ENCODE measurements at regions of chr13 and their contacts with region 1.

Region 1: GRCh38 chr13:98576963-98577822 is at the start of gene STK24:
- DNase-seq: peak; percentile 83
- ATAC-seq: peak; percentile 85
- total RNA-seq, gene STK24: 69.6 TPM

Region 2: DNA sequence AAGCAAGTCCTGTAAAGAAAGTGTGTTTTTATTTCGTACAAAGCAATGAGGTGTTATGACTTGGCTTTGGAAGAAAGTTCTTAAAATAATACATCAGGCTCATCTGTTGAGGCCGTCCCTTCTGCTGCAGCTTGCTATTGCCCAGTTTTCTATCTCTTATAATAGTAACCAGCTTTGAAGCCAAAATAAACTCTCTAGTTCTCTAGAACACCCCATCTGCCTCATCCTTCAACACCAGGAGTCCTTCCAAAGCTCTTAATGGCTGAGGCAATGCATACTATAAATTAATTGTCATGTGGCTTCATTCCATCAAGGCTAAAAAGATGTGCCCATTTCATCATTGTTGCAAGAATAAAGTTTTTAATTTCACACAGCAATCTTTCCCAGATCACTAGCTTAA is 673.1 kb before region 1 on chr13:
- intact Hi-C with region 1: no loop called
- DNase-seq: no peak
- ATAC-seq: peak; percentile 85

Region 3: DNA sequence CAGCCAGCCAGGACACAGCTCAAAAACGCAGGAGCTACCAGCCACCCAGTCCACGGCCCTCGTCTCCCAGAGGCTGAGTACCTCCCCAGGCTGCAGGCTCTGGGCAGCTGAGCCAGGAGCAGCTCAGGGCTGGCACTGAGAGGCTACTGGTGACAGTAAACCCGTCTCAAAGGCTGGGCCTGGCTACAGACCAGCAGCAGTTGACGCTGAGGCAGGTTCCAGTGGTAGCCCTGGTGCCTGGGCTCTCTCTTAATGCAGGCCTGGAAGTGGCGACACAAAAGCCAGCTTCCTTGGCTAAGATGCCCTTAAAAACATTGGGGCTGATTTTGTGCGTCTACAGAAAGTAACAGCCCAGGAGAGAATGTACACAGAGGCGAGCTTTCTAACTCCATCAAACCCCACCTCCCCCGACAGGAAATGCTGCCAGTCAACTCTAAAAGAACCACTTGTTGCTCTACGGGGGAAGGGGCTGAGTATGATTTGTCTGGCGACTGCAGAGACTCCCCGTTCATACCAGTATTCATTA is 126.6 kb before region 1 on chr13:
- intact Hi-C with region 1: loop called (anchors 1 kb)
- DNase-seq: peak; percentile 85
- ATAC-seq: peak; percentile 58

Region 4: GRCh38 chr13:98466634-98467236 is 110.5 kb before region 1 on chr13:
- intact Hi-C with region 1: loop called (anchors 5 kb)
- DNase-seq: no peak
- ATAC-seq: no peak

Region 5: GRCh38 chr13:98482476-98483444 is 94.4 kb before region 1 on chr13:
- intact Hi-C with region 1: loop called (anchors 2 kb)
- DNase-seq: no peak
- ATAC-seq: peak; percentile 51

Region 6: DNA sequence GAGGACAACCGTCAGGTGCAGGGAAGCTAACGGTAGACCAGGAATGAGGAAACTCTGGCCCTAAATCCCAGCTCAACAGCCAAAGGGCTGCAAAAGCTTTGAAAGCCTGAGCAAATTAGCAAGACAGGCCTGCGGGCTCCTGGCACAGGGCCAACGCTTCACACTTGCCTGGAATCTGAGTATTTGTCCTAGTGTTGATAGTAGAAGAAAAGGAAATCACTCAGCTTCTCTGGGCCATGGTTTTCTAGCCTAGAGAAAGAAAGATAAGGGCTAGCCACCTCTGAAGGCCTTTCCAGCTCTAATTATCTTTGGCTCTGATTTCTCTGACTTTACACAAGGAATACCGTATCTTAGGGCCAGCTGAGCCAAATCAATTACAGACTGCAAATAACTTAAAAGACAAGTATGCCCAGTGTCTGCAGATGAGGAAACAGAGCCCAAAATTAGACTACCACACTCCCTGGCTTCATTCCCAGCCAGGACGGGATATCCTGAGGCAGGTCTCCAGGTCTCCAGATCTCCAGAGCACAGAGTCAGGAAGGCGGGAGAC is 69.9 kb before region 1 on chr13:
- intact Hi-C with region 1: loop called (anchors 2 kb)
- DNase-seq: no peak
- ATAC-seq: peak; percentile 19

Region 7: GRCh38 chr13:98653463-98653985 is 76.3 kb after region 1 on chr13:
- intact Hi-C with region 1: loop called (anchors 5 kb)
- DNase-seq: no peak
- ATAC-seq: peak; percentile 86

Region 8: DNA sequence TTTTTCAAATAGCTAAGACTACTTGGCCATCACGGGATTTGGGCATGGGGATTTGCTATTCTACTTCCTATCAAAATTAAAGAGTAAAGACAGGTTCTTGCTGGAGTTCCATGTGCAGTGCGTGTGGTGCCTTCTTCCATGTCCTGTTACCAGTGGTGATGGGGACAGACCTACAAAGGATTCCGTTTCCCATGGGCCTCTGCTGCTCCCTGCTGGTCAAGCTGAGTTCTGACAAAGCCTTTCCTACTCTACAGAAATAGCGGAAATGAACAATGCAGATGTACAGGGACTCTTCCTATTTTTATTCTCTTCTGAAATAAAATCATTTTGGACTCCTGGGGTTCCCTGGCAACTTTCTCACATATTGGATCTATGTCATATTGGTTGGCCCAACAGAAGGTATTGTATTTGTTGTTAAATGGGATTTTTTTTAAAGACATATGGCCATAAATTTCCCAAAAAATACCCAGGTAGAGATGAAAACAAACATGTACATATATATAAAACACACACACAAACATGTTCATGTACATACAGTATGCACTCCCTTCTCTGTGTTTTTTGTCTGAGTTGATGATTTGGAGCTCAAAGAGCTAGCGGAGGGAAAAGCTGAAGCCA is 265.8 kb after region 1 on chr13:
- intact Hi-C with region 1: loop called (anchors 10 kb)
- DNase-seq: peak; percentile 76
- ATAC-seq: peak; percentile 80